ENCODE measurements at regions of chr11 and their contacts with region 1.

Region 1: DNA sequence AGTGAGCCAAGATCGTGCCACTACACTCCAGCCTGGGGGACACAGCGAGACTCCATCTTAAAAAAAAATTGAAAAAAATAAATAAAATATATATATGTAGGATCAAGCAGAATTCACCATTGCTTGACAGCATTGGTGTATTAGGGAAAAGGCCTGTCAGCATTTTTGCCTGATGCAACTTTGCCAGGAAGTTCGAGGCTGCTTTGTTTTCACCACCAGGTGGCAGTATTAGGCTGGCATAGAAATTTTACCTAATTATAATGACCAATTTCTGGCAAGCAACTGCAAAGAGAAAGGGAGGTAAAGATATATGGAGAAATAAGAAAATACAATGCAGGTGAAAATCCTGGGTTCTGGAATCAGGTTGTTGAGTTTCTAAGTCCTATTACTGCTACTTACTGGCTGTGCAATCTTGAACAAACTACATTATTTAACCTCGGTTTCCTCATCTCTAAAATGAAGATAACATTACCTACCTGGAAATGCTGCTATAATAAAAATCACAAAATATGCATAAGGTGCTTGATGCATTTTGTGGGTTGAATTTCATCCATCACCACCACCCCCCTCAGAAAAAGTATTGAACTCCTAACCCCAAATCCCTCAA is 24.7 kb downstream of the LAYN start:
- DNase-seq: peak; percentile 53
- H3K4me3 ChIP-seq: no peak overlapping the region
- H3K27ac ChIP-seq: no peak overlapping the region
- H3K4me1 ChIP-seq: peaks cover 17% of the 10 kb centered on the region
- H3K27me3 ChIP-seq: no peaks in the 10 kb centered on the region
- CTCF ChIP-seq: peak; percentile 86

Region 2: GRCh38 chr11:111299101-111300026 is 265.9 kb before region 1 on chr11:
- CTCF ChIA-PET with region 1: no interaction called
- dilution Hi-C with region 1: no loop called
- in situ Hi-C with region 1: loop called in 1 of 2 experiments (anchors 25 kb)
- intact Hi-C with region 1: no loop called
- DNase-seq: peak; percentile 17
- H3K4me3 ChIP-seq: peak overlapping the region; percentile 35 to 68 (median 55)
- H3K27ac ChIP-seq: no peak overlapping the region
- H3K4me1 ChIP-seq: peaks cover 7% of the 10 kb centered on the region
- H3K27me3 ChIP-seq: peaks cover 3% of the 10 kb centered on the region
- CTCF ChIP-seq: peak in 1 of 2 donors; percentile 59

Region 3: DNA sequence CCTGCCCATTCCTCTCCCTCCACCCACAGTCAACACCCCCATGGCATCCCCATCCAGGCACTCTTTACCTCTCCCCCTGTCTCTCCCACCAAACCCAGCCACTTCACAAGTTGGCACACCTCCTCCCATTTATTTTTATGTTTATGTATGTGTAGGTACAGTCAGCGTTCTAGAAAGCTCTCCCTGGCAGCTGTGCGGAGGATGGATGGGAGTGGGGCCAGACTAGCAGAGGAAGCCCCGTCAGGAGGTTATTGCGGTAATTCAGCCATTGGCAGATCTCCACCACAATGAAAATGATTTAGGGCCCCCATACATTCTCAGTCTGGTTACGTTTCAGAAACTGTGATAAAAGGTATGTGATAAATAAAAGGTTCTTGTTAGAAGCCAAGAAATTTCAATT is 104.4 kb before region 1 on chr11:
- CTCF ChIA-PET with region 1: no interaction called
- dilution Hi-C with region 1: loop called (anchors 5 kb)
- in situ Hi-C with region 1: loop called (anchors 5 to 10 kb)
- intact Hi-C with region 1: no loop called
- DNase-seq: no peak
- H3K4me3 ChIP-seq: no peak overlapping the region
- H3K27ac ChIP-seq: no peak overlapping the region
- H3K4me1 ChIP-seq: peaks cover 9% of the 10 kb centered on the region
- H3K27me3 ChIP-seq: no peaks in the 10 kb centered on the region
- CTCF ChIP-seq: no peak

Region 4: GRCh38 chr11:111841370-111842053 is 276.3 kb after region 1 on chr11:
- CTCF ChIA-PET with region 1: no interaction called
- dilution Hi-C with region 1: no loop called
- in situ Hi-C with region 1: loop called in 1 of 2 experiments (anchors 10 kb)
- intact Hi-C with region 1: loop called (anchors 1 kb)
- DNase-seq: peak; percentile 60
- H3K4me3 ChIP-seq: no peak overlapping the region
- H3K27ac ChIP-seq: no peak overlapping the region
- H3K4me1 ChIP-seq: no peaks in the 10 kb centered on the region
- H3K27me3 ChIP-seq: no peaks in the 10 kb centered on the region
- CTCF ChIP-seq: peak; percentile 87 to 88